ENCODE measurements at regions of chr1 and their contacts with region 1.

Region 1: DNA sequence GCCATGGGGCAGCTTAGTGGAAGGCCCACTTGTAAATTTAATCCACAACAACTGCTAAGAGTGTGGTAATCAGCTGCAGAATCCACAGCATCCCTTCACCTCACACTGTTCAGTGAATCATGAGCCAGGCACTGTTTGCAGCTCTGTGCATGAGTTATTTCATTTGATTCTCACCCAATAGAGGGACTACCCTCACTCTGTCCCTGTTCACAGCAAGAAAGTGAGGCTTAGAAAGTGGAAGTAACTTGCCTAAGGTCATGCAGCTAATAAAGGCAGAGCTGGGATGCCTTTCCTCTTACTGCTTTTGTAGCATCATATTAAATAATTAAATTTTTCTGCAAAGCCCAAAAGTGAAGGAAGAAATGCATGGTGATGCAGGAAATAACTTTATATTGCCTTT is 346.5 kb upstream of the PLD5 start:
- DNase-seq: peak; percentile 69
- H3K4me3 ChIP-seq: no peak overlapping the region
- H3K27ac ChIP-seq: peak overlapping the region; percentile 96
- H3K4me1 ChIP-seq: peaks cover 32% of the 10 kb centered on the region
- H3K27me3 ChIP-seq: no peaks in the 10 kb centered on the region
- CTCF ChIP-seq: no peak

Region 2: GRCh38 chr1:241551759-241552638 is 1319.0 kb before region 1 on chr1:
- CTCF ChIA-PET with region 1: no interaction called
- POLR2A ChIA-PET with region 1: no interaction called
- intact Hi-C with region 1: loop called (anchors 5 kb)
- DNase-seq: no peak
- H3K4me3 ChIP-seq: no peak overlapping the region
- H3K27ac ChIP-seq: peak overlapping the region; percentile 90
- H3K4me1 ChIP-seq: peaks cover 14% of the 10 kb centered on the region
- H3K27me3 ChIP-seq: no peaks in the 10 kb centered on the region
- CTCF ChIP-seq: no peak

Region 3: GRCh38 chr1:242225776-242226573 is 645.0 kb before region 1 on chr1:
- CTCF ChIA-PET with region 1: no interaction called
- POLR2A ChIA-PET with region 1: no interaction called
- intact Hi-C with region 1: loop called (anchors 10 kb)
- DNase-seq: no peak
- H3K4me3 ChIP-seq: no peak overlapping the region
- H3K27ac ChIP-seq: no peak overlapping the region
- H3K4me1 ChIP-seq: peaks cover 5% of the 10 kb centered on the region
- H3K27me3 ChIP-seq: no peaks in the 10 kb centered on the region
- CTCF ChIP-seq: no peak

Region 4: DNA sequence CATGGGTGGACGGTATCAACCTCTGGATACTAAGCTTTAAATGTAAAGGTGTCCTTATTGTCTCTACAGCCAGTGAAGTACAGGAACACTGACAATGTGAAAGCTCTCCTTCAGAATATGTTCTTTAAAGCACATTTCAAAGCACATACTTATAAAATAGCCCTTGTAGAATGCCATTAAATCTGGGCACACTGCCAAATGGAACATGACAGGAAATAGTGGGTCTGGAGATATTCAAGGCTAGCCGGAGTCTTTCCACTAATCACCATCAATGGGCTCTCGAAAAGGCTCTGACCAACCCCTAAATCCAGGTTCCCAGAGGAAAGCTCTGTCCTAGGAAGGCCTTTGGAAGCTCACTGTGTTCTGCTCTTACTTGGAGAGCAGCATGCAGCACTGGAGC is 393.0 kb before region 1 on chr1:
- CTCF ChIA-PET with region 1: no interaction called
- POLR2A ChIA-PET with region 1: no interaction called
- intact Hi-C with region 1: loop called (anchors 10 kb)
- DNase-seq: peak; percentile 76
- H3K4me3 ChIP-seq: no peak overlapping the region
- H3K27ac ChIP-seq: peak overlapping the region; percentile 42
- H3K4me1 ChIP-seq: peaks cover 19% of the 10 kb centered on the region
- H3K27me3 ChIP-seq: no peaks in the 10 kb centered on the region
- CTCF ChIP-seq: no peak

Region 5: DNA sequence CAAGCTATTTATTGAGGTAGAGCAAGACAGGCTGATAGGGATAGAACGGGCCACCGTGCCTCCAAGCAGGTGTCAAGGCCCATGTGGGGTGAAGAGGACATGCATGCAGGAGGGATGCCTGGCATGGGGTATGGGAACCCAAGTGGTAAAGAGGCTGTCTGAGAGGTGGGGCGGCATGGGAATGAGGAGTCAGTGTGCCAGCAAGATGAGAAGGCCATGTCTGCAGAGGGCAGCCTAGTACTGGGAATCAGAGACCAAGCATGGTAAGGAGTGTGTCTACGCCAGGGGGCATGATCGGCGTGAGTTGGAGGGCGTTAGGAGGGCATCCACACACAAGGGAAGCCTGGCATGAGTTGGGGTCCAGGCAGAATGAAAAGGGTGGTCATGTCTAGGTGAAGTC is 42.8 kb before region 1 on chr1:
- CTCF ChIA-PET with region 1: no interaction called
- POLR2A ChIA-PET with region 1: no interaction called
- intact Hi-C with region 1: no loop called
- DNase-seq: no peak
- H3K4me3 ChIP-seq: no peak overlapping the region
- H3K27ac ChIP-seq: no peak overlapping the region
- H3K4me1 ChIP-seq: no peaks in the 10 kb centered on the region
- H3K27me3 ChIP-seq: no peaks in the 10 kb centered on the region
- CTCF ChIP-seq: 0 out of 2 replicates have a peak, but pooled peaks have one; percentile 26

Measured in A673 (cell line).